ENCODE measurements at regions of chr11 and their contacts with region 1.

Region 1: DNA sequence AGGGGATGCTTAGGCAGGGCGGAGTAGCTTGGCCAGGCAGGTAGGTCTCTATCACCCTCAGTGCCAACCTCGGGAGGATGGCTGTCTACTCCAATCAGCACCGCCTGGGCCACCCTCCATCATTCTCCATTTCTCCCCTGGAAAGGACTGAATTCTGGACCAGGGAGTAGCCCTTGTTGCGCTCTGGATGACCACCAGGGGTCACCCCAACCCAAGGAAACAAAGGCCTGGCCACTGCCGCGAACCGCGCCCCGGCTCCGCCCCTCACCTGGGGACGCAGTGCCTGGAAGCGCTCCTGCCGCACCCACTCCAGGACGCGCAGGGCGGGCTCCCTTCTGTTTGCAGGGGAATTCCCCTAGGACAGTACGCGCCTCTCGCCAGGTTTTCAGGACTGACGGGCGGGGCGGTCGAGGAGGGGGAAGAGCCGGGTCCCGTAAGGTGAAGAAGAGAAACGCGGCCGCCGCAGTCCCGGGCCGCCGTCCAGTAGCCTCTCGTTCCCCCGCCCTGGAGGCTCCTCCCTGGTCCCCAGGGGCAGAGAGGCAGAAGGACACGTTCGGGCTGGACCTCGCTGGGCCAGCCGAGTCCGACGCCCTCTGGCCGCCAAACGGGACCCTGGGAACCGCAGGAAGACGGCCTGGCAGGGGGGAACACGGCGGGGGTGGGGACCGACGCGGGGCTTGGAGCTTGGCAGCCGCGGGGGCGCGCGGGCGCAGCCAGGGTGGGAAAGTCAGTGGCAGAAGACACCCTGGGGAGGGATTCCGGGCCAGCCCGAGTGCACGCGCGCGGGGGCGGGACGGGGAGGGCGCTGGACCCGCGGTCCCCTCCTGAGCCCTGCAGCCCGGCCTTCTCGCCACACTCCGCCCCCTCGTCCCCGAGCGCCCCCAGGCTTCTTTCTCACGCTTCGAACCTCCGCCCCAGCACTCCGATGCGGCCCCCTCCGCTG is 7.1 kb downstream of the SCN4B start:
- DNase-seq: peak; percentile 96
- ATAC-seq: peak; percentile 96
- H3K4me3 Mint-ChIP-seq: peak overlapping the region; percentile 73
- H3K27ac Mint-ChIP-seq: no peak overlapping the region
- H3K4me1 Mint-ChIP-seq: peaks cover 2% of the 10 kb centered on the region
- H3K27me3 Mint-ChIP-seq: peaks cover 43% of the 10 kb centered on the region

Region 2: DNA sequence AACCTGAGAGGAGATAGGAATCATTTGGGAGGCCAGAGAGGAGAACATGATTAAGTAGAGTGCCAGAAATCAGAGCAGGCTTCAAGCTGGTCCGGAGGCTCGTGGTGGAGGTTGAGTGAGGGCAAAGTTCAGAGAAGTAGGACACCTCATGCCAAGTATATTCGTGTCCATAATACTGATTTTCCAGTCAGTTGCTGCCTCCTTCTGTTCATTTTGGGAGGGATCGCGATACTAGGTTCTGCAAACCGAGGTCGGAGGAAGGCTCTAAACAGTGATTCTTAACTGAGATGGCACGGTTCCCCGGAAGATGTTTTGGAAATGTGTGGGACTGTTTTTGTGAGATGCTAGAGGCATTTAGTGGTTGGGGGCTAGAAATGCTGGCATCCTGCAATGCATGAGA is 145.4 kb after region 1 on chr11:
- CTCF ChIA-PET with region 1: interaction called, 9 read pairs
- POLR2A ChIA-PET with region 1: no interaction called
- intact Hi-C with region 1: loop called (anchors 1 kb)
- DNase-seq: peak; percentile 58
- ATAC-seq: peak; percentile 74
- H3K4me3 Mint-ChIP-seq: no peak overlapping the region
- H3K27ac Mint-ChIP-seq: peak overlapping the region; percentile 8
- H3K4me1 Mint-ChIP-seq: peaks cover 26% of the 10 kb centered on the region
- H3K27me3 Mint-ChIP-seq: no peaks in the 10 kb centered on the region

Region 3: GRCh38 chr11:118359295-118359958 is 213.9 kb after region 1 on chr11 and contains the start of gene UBE4A:
- CTCF ChIA-PET with region 1: no interaction called
- POLR2A ChIA-PET with region 1: no interaction called
- intact Hi-C with region 1: loop called (anchors 1 to 5 kb)
- DNase-seq: peak; percentile 99
- ATAC-seq: peak; percentile 96
- H3K4me3 Mint-ChIP-seq: peak within 1 kb of the TSS; percentile 100
- H3K27ac Mint-ChIP-seq: peak within 1 kb of the TSS; percentile 97
- H3K4me1 Mint-ChIP-seq: peaks cover 43% of the 10 kb centered on the region
- H3K27me3 Mint-ChIP-seq: no peaks in the 10 kb centered on the region
- total RNA-seq, gene UBE4A: 44.2 to 50.7 TPM

Region 4: GRCh38 chr11:118401151-118401878 is 255.8 kb after region 1 on chr11 and contains the start of gene ATP5MG:
- CTCF ChIA-PET with region 1: no interaction called
- POLR2A ChIA-PET with region 1: no interaction called
- intact Hi-C with region 1: no loop called
- DNase-seq: peak; percentile 96
- ATAC-seq: peak; percentile 63
- H3K4me3 Mint-ChIP-seq: peak within 1 kb of the TSS; percentile 93
- H3K27ac Mint-ChIP-seq: peak within 1 kb of the TSS; percentile 100
- H3K4me1 Mint-ChIP-seq: peaks cover 64% of the 10 kb centered on the region
- H3K27me3 Mint-ChIP-seq: no peaks in the 10 kb centered on the region
- total RNA-seq, gene ATP5MG: 136 to 229 TPM

Region 5: DNA sequence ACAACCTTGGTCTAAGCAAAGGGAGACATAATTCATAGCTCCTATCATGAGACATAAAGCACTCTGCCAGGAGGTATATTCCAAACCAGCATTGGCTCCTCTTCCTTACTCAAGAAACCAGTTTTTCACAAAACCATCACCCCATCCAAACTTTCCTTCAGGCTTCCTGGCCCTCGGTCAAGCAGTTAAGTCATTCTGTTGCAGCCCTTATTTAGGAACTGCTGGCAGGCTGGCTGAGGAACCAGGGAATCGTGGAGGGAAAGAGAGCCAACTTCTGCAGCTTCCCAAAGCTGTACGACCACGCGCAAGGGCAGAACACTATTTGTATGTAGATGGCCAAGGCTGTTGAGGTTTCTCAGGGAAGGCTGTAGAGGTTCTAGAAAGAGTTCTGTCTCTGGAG is 419.5 kb after region 1 on chr11:
- CTCF ChIA-PET with region 1: no interaction called
- POLR2A ChIA-PET with region 1: no interaction called
- intact Hi-C with region 1: loop called (anchors 1 kb)
- DNase-seq: no peak
- ATAC-seq: no peak
- H3K4me3 Mint-ChIP-seq: peak overlapping the region; percentile 90
- H3K27ac Mint-ChIP-seq: peak overlapping the region; percentile 76
- H3K4me1 Mint-ChIP-seq: peaks cover 16% of the 10 kb centered on the region
- H3K27me3 Mint-ChIP-seq: no peaks in the 10 kb centered on the region

Region 6: DNA sequence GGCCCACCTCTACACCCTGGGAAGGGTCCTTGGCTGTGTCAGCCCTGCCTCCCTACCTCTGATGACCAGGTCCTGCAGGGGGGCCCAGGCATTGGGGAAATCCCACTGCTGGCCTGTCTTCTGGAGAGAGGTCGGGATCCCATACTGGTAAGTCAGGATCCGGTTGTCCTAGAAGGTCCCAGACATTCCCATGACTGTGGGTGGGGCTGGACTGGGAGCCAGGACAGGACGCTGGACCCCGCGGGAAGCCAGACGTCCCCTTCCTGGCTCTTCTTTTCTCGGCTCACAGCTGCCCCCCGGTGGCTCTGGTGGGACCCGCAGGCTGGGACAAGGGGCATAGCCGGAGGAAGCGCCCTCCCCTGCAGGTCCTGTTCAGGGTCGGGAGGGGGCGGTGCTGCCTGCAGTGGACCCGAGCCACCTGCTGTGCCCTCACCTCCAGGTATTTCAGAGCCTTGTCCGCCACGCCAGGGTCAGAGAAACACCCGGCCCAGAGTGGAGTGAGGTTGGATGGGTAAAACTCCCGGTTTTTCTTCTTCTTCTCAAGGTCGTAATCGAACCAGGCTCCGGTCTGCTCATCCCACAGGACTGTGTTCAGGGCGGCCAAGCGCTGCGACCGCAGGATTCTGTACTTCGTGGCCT is 513.9 kb after region 1 on chr11:
- CTCF ChIA-PET with region 1: interaction called, 3 read pairs
- POLR2A ChIA-PET with region 1: no interaction called
- intact Hi-C with region 1: loop called in 1 of 2 experiments (anchors 1 kb)
- DNase-seq: peak; percentile 96
- ATAC-seq: peak; percentile 100
- H3K4me3 Mint-ChIP-seq: no peak overlapping the region
- H3K27ac Mint-ChIP-seq: no peak overlapping the region
- H3K4me1 Mint-ChIP-seq: no peaks in the 10 kb centered on the region
- H3K27me3 Mint-ChIP-seq: no peaks in the 10 kb centered on the region